Activated naive CD4-positive, alpha-beta T cell treated with anti-CD3 and anti-CD28 coated beads, Interleukin-2, amount 10 ng/mL, durations not matched to agents 7 days and 5 days (primary cell): ENCODE measurements at regions of chr2 and their contacts with region 1.

Region 1: DNA sequence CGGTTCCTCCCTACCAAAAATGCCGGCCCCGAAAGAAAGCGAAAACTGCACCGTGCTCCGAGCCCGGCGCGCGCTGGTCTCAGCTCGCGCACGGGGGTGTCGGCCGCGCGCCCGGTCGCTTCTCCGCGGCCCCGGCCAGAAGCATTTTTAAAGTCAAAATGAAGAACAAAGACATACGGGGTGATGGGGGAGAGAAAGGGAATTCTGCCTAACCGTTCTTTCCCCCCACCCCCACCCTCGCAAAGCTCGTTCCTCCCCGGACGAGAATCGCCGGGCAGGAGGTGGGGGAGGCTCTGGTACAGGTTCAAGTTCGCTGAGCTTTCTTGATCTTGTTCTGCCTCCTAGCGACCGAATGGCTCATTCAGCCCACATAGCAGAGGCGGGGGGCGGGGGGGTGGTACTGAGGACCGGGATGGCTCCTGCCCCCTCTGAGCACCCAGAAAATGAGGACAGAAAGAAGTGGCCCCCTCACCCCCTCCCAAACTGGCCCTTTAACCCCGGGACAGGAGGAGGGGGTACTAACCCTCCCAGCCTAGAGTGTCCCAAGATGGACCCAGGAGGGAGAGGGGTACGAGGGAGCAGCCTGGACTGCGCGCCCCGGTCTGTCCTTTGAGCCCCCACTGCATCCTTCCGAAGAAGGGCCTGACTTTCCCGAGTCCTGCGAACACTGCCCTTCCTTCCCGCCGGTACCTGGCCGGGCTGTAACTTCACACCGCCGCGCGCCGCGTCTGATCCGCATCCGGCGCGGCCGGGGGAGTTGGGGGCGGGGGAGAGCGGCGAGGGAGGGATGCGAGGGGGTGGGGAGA is 3.1 kb downstream of the BCL11A start:
- DNase-seq: peak; percentile 65
- H3K4me3 Mint-ChIP-seq: peak overlapping the region; percentile 80
- H3K27ac Mint-ChIP-seq: no peak overlapping the region
- H3K4me1 Mint-ChIP-seq: peaks cover 38% of the 10 kb centered on the region
- H3K27me3 Mint-ChIP-seq: peaks cover 80% of the 10 kb centered on the region

Region 2: GRCh38 chr2:59025157-59025757 is 1525.1 kb before region 1 on chr2:
- CTCF ChIA-PET with region 1: interaction called, 11 read pairs
- DNase-seq: peak; percentile 21
- H3K4me3 Mint-ChIP-seq: no peak overlapping the region
- H3K27ac Mint-ChIP-seq: no peak overlapping the region
- H3K4me1 Mint-ChIP-seq: no peaks in the 10 kb centered on the region
- H3K27me3 Mint-ChIP-seq: no peaks in the 10 kb centered on the region

Region 3: DNA sequence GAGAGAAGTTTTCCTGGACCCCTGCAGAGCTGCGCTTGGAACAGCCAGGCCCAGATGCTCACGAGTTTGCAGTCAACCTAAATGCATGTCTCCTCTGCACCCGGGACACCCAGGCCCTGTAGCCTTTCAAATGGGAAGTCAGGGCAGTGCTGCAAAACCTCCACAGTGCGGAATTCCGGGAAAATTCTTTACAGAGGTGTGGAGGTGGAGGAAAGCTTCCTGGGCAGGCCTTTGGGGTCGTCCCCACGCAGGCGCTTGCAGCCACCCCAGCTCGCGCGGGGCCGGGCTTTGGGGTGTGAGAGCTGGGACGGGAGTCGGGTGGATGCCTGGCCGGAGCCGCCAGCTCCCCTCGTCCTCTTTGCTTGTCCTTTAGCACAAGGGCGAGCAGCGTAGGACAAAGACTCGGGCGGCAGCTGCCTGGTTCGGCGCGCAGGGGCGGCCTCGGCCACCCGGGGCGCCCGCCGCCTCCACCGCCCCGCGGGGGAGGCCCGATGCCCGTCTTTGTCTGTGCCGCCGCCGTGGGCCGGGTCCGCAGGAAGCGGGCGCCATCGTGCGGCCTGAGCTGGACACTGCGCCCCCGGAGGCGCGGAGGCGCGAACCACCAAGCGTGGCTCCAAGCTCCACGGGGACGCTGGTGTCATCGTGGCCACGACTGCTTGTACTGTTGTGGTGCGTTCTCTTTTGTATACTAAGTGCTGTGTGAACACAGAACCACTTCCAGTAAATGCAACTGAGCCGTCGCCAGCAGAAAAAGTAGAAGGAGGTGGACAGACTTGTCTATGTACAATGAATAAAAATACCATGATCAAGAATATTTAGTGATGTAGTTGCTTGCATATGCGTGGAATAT is 31.3 kb after region 1 on chr2:
- CTCF ChIA-PET with region 1: interaction called, 20 read pairs
- DNase-seq: peak; percentile 70
- H3K4me3 Mint-ChIP-seq: no peak overlapping the region
- H3K27ac Mint-ChIP-seq: no peak overlapping the region
- H3K4me1 Mint-ChIP-seq: peaks cover 3% of the 10 kb centered on the region
- H3K27me3 Mint-ChIP-seq: peaks cover 62% of the 10 kb centered on the region